ENCODE measurements at regions of chr9 and their contacts with region 1.

Region 1: DNA sequence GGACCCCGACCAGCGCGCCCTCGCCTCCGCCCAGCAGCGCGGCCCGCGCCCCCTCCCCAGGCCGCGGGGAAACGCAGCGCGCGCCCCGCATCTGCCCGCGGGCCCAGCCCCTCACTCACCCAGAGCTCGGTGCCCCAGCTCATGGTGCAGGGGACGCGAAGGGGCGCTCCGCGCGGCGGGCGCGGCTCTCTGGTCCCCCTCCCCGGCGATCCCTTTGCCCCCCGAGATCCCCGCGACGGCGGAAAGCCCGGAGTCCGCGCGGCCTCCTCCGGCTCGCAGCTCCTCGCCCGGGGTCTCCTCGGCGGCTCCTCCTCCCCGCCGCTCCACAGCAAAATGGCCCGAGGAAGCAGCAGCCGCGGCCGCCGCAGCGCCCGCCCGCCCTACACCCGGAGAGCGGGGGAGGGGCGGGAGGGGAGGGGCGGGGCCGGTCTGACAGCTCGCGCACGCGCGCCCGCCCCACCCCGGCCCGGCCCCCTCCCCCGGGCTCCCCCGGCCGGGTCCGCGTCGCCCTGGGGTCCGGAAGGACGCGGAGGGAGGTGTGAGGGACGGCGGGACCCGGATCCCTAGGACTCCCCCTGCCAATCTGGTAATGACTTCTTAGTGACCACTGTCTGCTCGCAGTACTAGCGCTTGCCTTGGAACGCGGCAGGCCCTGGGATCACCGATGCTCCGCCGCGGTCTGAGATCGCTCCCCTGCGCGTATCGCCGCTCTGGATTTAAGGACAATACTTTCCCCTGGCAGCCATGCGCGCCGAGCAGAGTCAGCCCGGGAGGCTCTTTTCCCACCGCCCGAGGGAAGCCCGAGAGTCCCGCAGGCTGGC is at the start of gene FNBP1:
- DNase-seq: peak; percentile 74 to 83
- ATAC-seq: peak; percentile 84 to 86
- H3K4me3 ChIP-seq: peak within 1 kb of the TSS; percentile 99
- H3K27ac ChIP-seq: peak within 1 kb of the TSS; percentile 89 to 94
- H3K4me1 ChIP-seq: peaks cover 13% of the 10 kb centered on the region
- CTCF ChIP-seq: no peak
- EP300 ChIP-seq: no peak
- POLR2A ChIP-seq: peak; percentile 52
- RAD21 ChIP-seq: no peak; a peak in 1 of 5 replicates
- polyA plus RNA-seq, gene FNBP1: 15.6 and 17.9 TPM in 2 replicates

Region 2: GRCh38 chr9:130029223-130029973 is 13.6 kb before region 1 on chr9:
- CTCF ChIA-PET with region 1: interaction called, 13 read pairs
- POLR2A ChIA-PET with region 1: interaction called, 3 read pairs
- DNase-seq: no peak
- ATAC-seq: no peak
- H3K4me3 ChIP-seq: no peak overlapping the region
- H3K27ac ChIP-seq: no peak overlapping the region
- H3K4me1 ChIP-seq: peaks cover 19% of the 10 kb centered on the region
- CTCF ChIP-seq: no peak
- EP300 ChIP-seq: no peak
- POLR2A ChIP-seq: no peak
- RAD21 ChIP-seq: no peak

Region 3: GRCh38 chr9:130053504-130054324 is 10.7 kb after region 1 on chr9 and contains the start of gene GPR107:
- CTCF ChIA-PET with region 1: interaction called, 9 read pairs
- POLR2A ChIA-PET with region 1: interaction called, 28 read pairs
- DNase-seq: peak; percentile 67 to 92
- ATAC-seq: peak; percentile 98 to 99
- H3K4me3 ChIP-seq: peak within 1 kb of the TSS; percentile 67
- H3K27ac ChIP-seq: peak within 1 kb of the TSS; percentile 92 to 97
- H3K4me1 ChIP-seq: peaks cover 17% of the 10 kb centered on the region
- CTCF ChIP-seq: no peak
- EP300 ChIP-seq: no peak
- POLR2A ChIP-seq: peak; percentile 83
- RAD21 ChIP-seq: no peak
- polyA plus RNA-seq, gene GPR107: 45.1 and 62.4 TPM in 2 replicates